Aorta (tissue), 5 donors: ENCODE measurements at regions of chr14 and their contacts with region 1.

Region 1: DNA sequence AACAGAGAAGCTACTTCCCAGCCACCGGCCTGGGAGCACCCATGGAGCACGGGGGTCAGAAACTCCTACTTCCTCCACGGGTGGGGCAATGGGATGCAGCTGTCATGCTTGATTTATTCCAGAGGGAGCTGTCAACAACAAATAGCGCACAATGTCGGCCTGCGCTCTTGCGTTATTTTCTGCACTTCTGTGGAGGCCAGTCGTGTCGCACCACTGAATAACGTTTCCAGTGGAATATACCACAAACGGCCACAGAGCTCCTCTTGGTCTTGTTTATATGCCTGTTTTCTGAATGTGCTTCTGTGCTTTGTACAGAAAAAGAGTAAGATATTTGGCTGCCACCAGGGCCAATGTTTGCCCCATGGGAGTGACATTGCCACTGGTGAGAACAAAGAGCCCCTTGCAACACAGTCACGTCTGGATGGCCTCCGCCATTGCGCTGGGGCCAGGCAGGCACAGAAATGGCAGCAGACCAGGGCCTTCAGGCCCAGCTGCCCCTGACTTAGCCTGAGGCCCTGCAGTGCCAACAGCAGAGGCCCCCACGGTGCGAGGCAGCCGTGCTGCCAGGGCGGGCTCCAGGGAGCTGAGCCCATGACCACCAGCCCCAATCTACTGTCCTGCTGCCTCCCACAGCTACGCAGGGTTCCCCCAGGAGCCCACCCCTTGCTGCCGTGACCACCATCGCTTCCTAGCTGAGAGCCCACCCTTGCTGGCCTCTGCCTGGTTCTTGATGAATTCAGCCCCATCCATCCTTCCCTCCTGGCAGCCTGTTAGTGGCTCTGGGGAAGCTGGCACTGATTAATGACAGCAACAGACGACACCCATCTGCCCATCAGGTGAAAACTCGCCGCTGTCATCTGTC is 28.9 kb upstream of the TMEM179 start:
- DNase-seq: no peak
- ATAC-seq: no peak
- H3K4me3 ChIP-seq: no peak overlapping the region
- H3K27ac ChIP-seq: no peak overlapping the region
- H3K4me1 ChIP-seq: no peaks in the 10 kb centered on the region
- H3K27me3 ChIP-seq: no peaks in the 10 kb centered on the region

Region 2: DNA sequence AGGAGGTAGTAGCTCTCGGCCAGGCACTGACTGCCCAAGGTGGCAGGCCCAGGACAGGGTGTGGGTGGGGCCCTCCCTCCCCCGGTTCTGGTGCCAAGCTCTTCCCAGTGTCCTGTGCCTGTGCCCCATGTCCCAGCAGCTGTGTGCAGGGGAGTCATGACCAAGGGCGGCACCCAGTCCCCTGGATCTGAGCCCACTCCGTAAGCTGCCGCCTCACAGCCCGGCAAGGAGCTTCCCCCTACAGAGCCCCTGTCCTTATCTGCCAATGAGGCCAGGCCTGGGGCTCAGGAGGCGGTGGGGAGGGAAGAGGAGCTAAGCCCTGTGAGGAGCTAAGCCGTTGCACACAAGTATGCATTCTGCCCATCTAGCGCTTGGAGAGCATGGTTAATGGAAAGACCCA is 59.6 kb before region 1 on chr14:
- intact Hi-C with region 1: loop called in 1 of 2 experiments (anchors 5 kb)
- DNase-seq: no peak
- ATAC-seq: no peak
- H3K4me3 ChIP-seq: no peak overlapping the region
- H3K27ac ChIP-seq: no peak overlapping the region
- H3K4me1 ChIP-seq: no peaks in the 10 kb centered on the region
- H3K27me3 ChIP-seq: no peaks in the 10 kb centered on the region